AG04449 (cell line): ENCODE measurements at regions of chr4 and their contacts with region 1.

Region 1: DNA sequence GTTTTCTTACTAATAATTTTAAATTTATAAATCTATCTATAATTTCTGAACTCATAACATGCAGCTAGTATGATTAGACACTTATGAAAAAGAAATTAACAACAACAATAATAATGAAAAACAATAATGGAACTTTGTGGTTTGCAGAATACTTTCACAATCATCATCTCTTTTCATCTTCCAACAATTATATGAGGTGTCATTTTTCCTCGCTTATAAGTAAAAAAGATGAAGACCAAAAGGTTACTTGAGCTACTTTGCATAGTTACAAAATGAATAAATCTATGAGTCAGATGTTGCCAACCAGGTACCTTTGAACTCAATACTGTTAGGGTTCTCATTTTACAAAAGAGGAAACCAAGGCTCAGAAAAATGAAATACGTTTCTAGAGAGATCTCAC is 98.5 kb upstream of the ELOVL6 start:
- DNase-seq: no peak
- H3K4me3 ChIP-seq: no peak overlapping the region
- CTCF ChIP-seq: no peak

Region 2: GRCh38 chr4:110310795-110311194 is 13.9 kb after region 1 on chr4:
- CTCF ChIA-PET with region 1: interaction called, 11 read pairs
- POLR2A ChIA-PET with region 1: no interaction called
- DNase-seq: no peak
- H3K4me3 ChIP-seq: no peak overlapping the region
- CTCF ChIP-seq: no peak